Mammary epithelial cell (primary cell): ENCODE measurements at regions of chr4 and their contacts with region 1.

Region 1: DNA sequence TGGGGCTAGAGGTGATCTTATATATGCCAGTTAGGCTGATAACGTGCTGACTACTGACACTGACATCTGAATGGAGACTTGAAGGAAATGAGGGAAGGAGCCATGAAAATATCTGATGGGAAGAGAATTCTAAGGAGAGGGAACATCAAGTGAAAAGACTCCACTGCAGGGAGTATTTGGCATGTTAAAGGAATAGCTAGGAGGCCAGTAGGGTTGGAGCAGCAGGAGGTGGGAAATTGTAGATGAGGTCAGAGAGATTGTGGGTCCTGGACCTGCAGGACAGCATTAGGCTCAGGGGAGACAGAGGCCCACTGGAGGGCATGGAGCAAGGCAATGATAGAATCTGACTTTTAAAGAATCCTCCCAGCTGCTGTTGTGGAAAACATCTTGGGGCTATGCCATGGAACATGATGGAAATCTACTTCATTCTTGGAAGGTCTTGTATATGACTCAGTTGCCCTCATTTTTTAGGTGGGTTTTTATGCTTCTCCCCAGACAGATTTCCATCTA is 55.8 kb upstream of the NSUN7 start:
- DNase-seq: no peak
- H3K4me3 ChIP-seq: no peak overlapping the region
- H3K27ac ChIP-seq: no peak overlapping the region
- H3K4me1 ChIP-seq: no peaks in the 10 kb centered on the region
- H3K27me3 ChIP-seq: peaks cover 5% of the 10 kb centered on the region
- CTCF ChIP-seq: no peak

Region 2: GRCh38 chr4:39840027-39840426 is 854.0 kb before region 1 on chr4:
- CTCF ChIA-PET with region 1: no interaction called
- dilution Hi-C with region 1: no loop called
- in situ Hi-C with region 1: no loop called
- intact Hi-C with region 1: no loop called
- DNase-seq: no peak
- H3K4me3 ChIP-seq: no peak overlapping the region
- H3K27ac ChIP-seq: no peak overlapping the region
- H3K4me1 ChIP-seq: no peaks in the 10 kb centered on the region
- H3K27me3 ChIP-seq: no peaks in the 10 kb centered on the region
- CTCF ChIP-seq: no peak

Region 3: GRCh38 chr4:40613456-40613855 is 80.5 kb before region 1 on chr4:
- CTCF ChIA-PET with region 1: no interaction called
- dilution Hi-C with region 1: loop called (anchors 5 kb)
- in situ Hi-C with region 1: no loop called
- intact Hi-C with region 1: no loop called
- DNase-seq: no peak
- H3K4me3 ChIP-seq: no peak overlapping the region
- H3K27ac ChIP-seq: no peak overlapping the region
- H3K4me1 ChIP-seq: no peaks in the 10 kb centered on the region
- H3K27me3 ChIP-seq: no peaks in the 10 kb centered on the region
- CTCF ChIP-seq: no peak

Region 4: DNA sequence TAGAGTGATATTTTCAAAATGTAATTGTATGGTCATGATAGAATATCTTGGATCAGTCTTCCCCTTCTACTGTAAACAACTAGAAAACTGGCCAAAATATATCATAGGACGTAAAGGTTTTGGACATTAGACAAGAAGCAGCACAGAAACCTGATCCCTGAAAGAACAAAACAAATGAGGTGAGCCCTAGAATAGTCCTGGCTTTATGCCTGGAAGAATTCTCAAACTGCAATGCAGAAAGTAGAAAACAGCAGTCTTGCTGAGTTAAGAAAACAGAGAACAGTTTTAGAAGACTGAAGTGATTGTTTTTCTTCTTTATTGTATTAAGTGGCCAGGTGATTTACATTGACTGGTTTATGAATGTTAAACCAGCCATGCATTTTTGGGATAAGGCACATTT is 75.3 kb after region 1 on chr4:
- CTCF ChIA-PET with region 1: no interaction called
- dilution Hi-C with region 1: loop called (anchors 5 kb)
- in situ Hi-C with region 1: no loop called
- intact Hi-C with region 1: no loop called
- DNase-seq: no peak
- H3K4me3 ChIP-seq: no peak overlapping the region
- H3K27ac ChIP-seq: no peak overlapping the region
- H3K4me1 ChIP-seq: no peaks in the 10 kb centered on the region
- H3K27me3 ChIP-seq: no peaks in the 10 kb centered on the region
- CTCF ChIP-seq: no peak

Region 5: DNA sequence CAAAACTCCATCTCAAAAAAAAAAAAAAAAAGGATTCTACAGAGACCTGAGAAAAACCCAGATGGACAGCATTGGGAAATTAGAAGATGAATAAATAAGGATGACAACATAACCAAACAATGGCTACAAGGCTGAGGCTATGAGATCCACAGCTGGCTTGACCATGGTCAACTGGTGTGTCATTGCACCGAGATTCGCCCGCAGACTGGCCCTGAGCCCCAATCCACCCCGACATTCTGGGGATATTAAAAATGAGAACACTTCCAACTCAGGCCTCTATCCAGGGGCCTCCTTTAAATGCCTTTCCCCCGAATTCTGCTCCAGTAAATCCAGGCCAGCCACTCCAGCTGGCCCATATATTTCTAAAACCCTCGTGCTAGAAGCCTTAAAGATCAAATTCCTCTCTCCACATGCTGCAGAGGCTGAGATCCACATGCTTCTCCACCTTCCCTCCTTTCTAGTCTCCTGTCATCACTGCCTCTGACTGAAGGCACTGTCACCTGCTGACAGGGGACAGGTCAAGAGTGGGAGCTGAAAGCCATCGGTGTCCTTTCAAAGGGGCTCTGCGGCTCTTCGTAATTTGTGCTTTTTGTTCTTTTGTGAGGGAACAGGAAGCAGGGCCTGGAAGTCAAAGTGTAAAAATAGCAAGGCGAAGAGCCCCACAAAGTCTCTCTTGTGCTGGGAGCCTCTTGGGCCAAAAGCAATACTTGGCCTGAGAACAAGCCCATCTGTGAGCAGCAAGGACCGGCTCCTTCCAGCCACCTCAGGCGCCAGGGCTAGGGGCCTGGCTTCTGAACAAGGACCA is 259.5 kb after region 1 on chr4:
- CTCF ChIA-PET with region 1: no interaction called
- dilution Hi-C with region 1: no loop called
- in situ Hi-C with region 1: no loop called
- intact Hi-C with region 1: no loop called
- DNase-seq: no peak
- H3K4me3 ChIP-seq: no peak overlapping the region
- H3K27ac ChIP-seq: no peak overlapping the region
- H3K4me1 ChIP-seq: no peaks in the 10 kb centered on the region
- H3K27me3 ChIP-seq: no peaks in the 10 kb centered on the region
- CTCF ChIP-seq: no peak

Region 6: DNA sequence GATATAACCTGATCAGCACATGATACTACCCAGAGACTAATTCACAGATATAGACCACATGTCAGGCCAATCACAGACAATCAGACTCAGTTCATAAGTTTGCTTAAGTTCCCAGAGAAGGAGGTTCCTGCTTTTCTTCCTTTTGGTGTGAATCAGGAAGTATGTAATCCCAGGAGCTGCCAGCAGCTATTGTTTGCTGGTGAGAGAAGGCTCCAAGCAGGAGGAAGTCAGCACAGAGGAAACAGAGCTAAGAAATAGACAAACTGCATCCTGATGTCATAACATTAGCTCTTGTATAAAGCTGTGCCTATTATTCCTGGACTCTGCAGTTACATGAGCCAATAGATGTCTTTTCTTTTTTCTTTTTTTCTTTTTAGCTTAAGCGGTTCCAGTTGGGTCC is 613.6 kb after region 1 on chr4:
- CTCF ChIA-PET with region 1: no interaction called
- dilution Hi-C with region 1: no loop called
- in situ Hi-C with region 1: no loop called
- intact Hi-C with region 1: no loop called
- DNase-seq: no peak
- H3K4me3 ChIP-seq: no peak overlapping the region
- H3K27ac ChIP-seq: no peak overlapping the region
- H3K4me1 ChIP-seq: no peaks in the 10 kb centered on the region
- H3K27me3 ChIP-seq: no peaks in the 10 kb centered on the region
- CTCF ChIP-seq: no peak